PC-9 (cell line): ENCODE measurements at regions of chr22 and their contacts with region 1.

Region 1: DNA sequence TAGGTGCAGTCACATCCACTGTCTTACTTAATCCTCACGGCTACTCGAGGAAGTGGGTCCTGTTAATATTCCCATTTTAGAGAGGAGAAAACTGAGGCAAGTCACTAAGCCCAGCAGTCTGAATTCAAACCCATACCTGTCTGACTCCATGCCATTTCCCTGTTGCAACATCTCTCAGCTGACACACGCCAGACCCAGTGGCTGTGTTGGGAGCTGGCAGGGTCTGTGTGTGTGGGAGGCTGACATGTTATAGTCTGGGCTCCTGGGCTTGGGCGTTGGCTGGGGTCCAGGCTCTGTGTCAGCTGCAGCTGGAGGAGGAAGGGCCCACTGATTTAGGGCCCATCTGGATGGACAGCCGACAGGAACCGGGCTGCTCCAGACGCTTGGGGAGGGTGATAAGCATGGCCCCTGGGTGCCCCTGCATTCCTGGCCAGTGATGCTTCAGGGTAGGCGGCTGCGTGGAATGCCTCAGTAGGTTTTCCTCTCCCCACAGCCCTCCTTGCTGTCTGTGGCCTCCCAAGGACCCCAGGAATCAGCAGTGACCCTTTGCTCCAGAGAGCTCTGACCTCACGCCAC is 562.5 kb downstream of the MN1 start:
- DNase-seq: peak; percentile 44 to 73
- H3K4me3 ChIP-seq: no peak overlapping the region
- H3K27ac ChIP-seq: no peak overlapping the region
- H3K4me1 ChIP-seq: peaks cover 10% of the 10 kb centered on the region
- H3K27me3 ChIP-seq: no peaks in the 10 kb centered on the region
- CTCF ChIP-seq: no peak

Region 2: GRCh38 chr22:27201741-27202140 is 37.3 kb before region 1 on chr22:
- CTCF ChIA-PET with region 1: no interaction called
- POLR2A ChIA-PET with region 1: no interaction called
- intact Hi-C with region 1: loop called (anchors 1 kb)
- DNase-seq: no peak
- H3K4me3 ChIP-seq: no peak overlapping the region
- H3K27ac ChIP-seq: peak overlapping the region; percentile 82
- H3K4me1 ChIP-seq: peaks cover 35% of the 10 kb centered on the region
- H3K27me3 ChIP-seq: no peaks in the 10 kb centered on the region
- CTCF ChIP-seq: no peak

Region 3: DNA sequence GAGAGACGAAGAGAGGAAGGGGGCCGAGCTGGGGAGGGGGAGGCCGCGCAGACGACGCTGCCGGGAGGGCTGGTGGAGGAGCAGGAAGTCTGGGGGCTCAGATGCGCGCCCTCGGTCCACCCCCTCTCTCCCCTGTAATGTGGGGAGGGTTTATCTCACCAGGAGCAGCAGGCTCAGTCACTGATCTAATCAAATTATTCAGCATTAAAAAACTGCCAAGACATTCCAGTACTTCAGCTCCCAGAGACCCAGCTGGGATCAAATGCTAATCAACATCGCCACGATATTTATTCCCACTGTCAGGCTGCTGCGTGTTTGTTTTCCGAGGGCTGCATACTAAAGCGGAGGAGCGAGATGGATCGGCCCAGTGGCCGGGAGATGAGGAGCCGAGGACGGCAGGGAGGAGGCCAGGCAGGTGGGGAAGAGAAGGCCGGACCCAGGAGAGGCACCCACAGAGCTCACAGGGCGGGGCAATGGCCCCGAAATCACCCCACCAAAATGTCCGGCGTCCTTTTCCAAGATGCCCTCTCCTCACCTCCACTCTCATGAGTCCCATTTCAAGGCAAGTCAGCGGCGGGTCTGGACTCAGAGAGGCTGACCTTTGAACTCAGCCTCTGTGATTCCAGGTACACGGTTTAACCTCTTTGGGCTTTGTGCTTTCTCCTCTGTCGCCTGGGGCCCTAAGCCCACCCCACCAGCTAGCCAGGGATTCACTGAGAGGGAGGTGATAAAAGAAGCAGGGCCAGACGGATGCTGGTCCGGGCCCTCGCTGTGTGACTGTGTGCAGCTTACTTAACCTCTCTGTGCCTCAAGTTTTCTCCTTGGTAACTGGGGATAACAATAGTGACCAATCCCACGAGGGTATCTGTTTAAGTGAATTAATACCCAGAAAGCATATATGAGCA is 60.4 kb after region 1 on chr22:
- CTCF ChIA-PET with region 1: no interaction called
- POLR2A ChIA-PET with region 1: no interaction called
- intact Hi-C with region 1: no loop called
- DNase-seq: no peak
- H3K4me3 ChIP-seq: no peak overlapping the region
- H3K27ac ChIP-seq: no peak overlapping the region
- H3K4me1 ChIP-seq: no peaks in the 10 kb centered on the region
- H3K27me3 ChIP-seq: no peaks in the 10 kb centered on the region
- CTCF ChIP-seq: no peak